ENCODE measurements at regions of chrX and their contacts with region 1.

Region 1: DNA sequence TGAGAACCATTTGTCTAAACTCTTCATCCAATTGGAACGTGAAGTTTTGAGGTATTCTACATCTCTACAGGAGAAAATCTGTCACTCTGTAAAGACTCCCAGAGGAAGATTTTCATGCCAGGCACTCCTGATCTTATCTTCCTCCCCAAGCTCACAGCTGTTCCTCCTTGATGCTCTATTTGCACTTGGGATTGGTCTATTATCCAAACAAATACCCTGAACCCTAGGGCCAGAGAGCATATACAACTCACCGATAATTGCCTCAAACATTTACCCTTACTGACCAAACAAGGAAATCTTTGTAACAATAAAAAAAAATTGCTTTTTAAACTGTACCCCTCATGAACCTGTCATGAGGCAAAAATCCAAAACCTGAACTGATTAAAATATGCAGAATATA is 372.7 kb downstream of the SH2D1A start:
- DNase-seq: peak; percentile 31
- ATAC-seq: peak; percentile 81
- H3K4me3 ChIP-seq: no peak overlapping the region
- H3K27ac ChIP-seq: no peak overlapping the region
- H3K4me1 ChIP-seq: peaks cover 5% of the 10 kb centered on the region; the same call in 1 of the 2 replicates
- H3K27me3 ChIP-seq: no peaks in the 10 kb centered on the region
- CTCF ChIP-seq: no peak
- EP300 ChIP-seq: 0 out of 4 replicates have a peak, but pooled peaks of 1 of the 2 experiments have one; percentile 25
- POLR2A ChIP-seq: no peak
- RAD21 ChIP-seq: no peak

Region 2: DNA sequence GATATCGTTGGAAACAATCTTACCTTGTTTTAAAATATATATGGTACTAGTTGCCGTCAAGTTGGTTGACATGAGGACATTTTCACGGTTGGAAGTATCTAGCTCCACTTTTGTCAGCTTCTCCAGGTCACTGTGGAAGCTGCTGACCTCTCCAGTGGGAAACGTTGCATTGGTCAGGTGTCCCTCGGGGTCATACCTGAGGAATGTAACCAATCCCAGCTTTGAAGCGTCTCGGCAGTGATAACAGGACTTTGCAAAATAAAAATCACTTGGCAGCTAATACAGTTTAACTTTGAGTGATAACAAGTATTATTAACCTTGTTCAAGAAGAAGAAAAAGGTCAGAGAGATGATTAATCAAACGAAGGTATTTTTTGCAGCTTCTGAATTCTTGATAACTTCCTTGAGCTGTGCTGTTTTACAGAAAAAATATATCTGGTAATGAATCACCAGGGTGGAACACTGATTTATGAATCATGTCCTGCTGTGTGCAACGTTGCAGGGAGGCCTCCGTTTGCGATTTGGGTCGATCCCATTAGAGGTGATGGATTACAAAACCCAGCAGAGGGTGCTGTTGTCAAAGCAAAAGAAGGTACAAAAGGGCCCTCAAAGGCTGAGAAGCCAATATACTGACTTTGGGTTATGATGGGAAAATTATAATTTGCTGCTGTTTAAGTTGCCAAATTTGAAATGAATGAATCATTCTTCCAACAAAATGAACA is 312.6 kb before region 1 on chrX:
- CTCF ChIA-PET with region 1: no interaction called
- POLR2A ChIA-PET with region 1: no interaction called
- in situ Hi-C with region 1: no loop called
- intact Hi-C with region 1: loop called (anchors 10 kb)
- DNase-seq: peak; percentile 31
- ATAC-seq: peak; percentile 79
- H3K4me3 ChIP-seq: no peak overlapping the region
- H3K27ac ChIP-seq: no peak overlapping the region
- H3K4me1 ChIP-seq: no peaks in the 10 kb centered on the region
- H3K27me3 ChIP-seq: 0 out of 5 replicates have a peak, but pooled peaks cover 0 to 1% of the 10 kb centered on the region in 2 experiments
- CTCF ChIP-seq: peak; percentile 64
- EP300 ChIP-seq: no peak
- POLR2A ChIP-seq: no peak
- RAD21 ChIP-seq: 0 out of 2 replicates have a peak, but pooled peaks have one; percentile 15

Measured in HepG2 (cell line).